Activated CD4-positive, alpha-beta memory T cell treated with anti-CD3 and anti-CD28 coated beads for 36 hours (primary cell): ENCODE measurements at regions of chr10 and their contacts with region 1.

Region 1: DNA sequence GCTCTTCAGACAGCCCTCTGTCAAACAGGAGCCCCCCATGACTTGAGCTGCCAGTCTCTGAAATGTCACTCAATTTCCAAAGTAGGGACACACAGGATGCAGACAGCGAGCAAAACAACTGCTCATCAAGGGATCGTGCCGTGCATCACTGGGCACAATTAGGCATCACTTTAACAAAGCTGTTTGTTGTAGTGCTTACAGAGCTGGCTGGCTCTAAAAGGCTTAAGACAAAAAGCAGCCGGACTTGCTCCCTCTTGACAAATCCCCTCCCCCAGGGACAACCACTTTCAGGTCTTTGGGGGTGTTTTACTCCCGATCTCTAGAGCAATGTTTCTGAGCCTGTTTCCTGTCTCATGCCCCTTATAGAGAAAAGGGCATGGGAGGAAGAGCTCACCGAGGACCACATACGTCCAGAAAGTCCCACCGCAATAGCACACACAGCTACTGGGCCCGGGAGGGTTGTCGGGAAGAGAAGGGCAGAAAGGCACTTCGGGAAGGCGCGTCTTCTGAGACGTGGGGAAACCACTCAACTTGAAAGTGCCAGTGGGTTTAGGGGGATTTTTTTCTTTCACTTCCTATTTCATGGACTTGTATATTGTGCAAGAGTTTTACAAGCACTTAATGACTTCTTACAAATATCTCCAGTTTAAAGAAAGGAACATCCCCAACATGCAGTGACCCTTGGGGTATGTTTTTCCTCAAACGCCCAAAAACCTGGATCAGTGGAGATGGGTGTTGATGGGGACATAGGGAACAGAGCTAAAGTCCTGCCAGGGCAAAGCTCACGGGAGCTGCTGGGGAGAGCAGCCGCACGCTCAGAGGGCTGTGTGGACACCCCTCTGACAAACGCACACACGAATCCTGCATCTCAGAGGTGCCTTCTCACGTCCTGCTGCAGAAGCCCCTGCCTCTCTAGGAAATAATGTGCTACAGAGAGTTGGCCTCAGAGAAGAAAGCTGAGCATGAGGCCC is 27.1 kb downstream of the LRRC20 start:
- DNase-seq: peak; percentile 48
- H3K4me3 Mint-ChIP-seq: peak overlapping the region; percentile 57
- H3K27ac Mint-ChIP-seq: peak overlapping the region; percentile 62
- H3K4me1 Mint-ChIP-seq: peaks cover 28% of the 10 kb centered on the region
- H3K27me3 Mint-ChIP-seq: no peaks in the 10 kb centered on the region

Region 2: DNA sequence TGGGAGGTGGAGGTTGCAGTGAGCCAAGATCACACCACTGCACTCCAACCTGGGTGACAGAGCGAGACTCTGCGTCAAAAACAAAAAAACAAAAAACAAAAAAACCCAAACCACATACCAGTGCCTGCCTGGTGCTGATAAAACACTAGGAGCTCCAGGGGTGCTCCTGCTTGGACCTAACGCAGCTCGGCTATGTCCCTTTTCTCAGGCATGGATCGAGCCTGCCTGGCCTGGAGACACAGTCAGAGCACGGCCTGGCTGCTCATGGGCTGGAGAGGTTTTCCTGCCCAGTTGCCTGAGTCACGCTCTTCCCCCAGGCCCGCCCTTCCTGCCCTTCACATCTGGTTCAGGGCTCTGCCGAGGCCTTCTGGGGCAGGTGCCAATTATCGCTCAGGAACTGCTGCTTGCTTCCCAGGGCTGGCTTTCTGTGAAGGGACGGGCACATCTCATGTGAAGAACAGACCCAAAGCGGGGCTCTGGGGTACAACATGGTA is 58.9 kb before region 1 on chr10:
- CTCF ChIA-PET with region 1: no interaction called
- POLR2A ChIA-PET with region 1: no interaction called
- intact Hi-C with region 1: loop called (anchors 2 kb)
- DNase-seq: no peak
- H3K4me3 Mint-ChIP-seq: no peak overlapping the region
- H3K27ac Mint-ChIP-seq: no peak overlapping the region
- H3K4me1 Mint-ChIP-seq: no peaks in the 10 kb centered on the region
- H3K27me3 Mint-ChIP-seq: no peaks in the 10 kb centered on the region